Aorta (tissue), 5 donors: ENCODE measurements at regions of chr2 and their contacts with region 1.

Region 1: DNA sequence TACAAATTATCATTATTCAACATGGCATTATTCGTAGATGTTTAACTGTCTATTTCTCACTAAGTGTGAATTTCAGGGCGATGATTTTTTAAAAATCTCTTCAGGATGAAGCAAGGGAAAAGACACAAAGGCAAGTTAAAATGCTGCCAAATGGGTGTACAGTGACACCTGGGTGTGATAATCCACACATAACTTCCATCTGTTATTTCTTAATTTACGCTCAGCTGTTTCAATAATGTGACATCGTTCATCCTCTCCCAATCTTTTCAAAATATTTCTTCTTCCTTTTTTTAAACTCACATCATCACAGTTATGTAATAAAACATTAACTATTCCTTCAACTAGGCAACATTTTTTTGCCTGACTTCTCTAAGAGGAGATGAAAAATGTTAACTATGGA is 10.6 kb downstream of the PDE1A start:
- DNase-seq: no peak
- ATAC-seq: no peak
- H3K4me3 ChIP-seq: no peak overlapping the region
- H3K27ac ChIP-seq: no peak overlapping the region
- H3K4me1 ChIP-seq: peaks cover 0 to 3% of the 10 kb centered on the region in 2 donors
- H3K27me3 ChIP-seq: no peaks in the 10 kb centered on the region

Region 2: DNA sequence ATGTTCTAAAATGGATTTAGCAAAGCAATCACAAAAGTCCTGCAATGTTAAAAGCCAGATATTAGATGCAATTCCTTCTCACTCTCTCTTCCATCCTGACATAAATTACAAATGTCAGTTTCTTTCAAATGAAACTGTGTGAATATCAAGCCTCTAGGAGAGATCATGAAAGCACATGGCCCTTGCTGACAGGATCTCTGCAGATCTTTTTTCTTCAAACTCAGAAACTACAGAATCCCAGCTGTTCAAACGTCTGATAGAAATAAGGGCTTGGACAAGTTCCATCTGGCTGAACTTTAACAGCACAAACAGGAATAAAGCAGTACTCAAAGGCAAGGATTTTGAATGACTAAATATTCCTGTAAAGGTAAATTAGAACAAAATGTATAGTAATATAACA is 37.0 kb before region 1 on chr2:
- intact Hi-C with region 1: loop called in 1 of 2 experiments (anchors 5 kb)
- DNase-seq: no peak
- ATAC-seq: peak; percentile 36
- H3K4me3 ChIP-seq: no peak overlapping the region
- H3K27ac ChIP-seq: no peak overlapping the region
- H3K4me1 ChIP-seq: peaks cover 0 to 2% of the 10 kb centered on the region in 2 donors
- H3K27me3 ChIP-seq: no peaks in the 10 kb centered on the region